ENCODE measurements at regions of chr10 and their contacts with region 1.

Region 1: GRCh38 chr10:29304264-29305030 is 15.6 kb downstream of the LYZL1 start:
- DNase-seq: peak in 1 of 2 donors; percentile 30
- ATAC-seq: peak; percentile 64 to 91 (median 78)
- H3K4me3 ChIP-seq: no peak overlapping the region
- H3K27ac ChIP-seq: no peak overlapping the region
- H3K4me1 ChIP-seq: no peaks in the 10 kb centered on the region
- H3K27me3 ChIP-seq: peaks cover 0 to 3% (median 0%) of the 10 kb centered on the region in 3 donors
- CTCF ChIP-seq: peak; percentile 81

Region 2: GRCh38 chr10:28628184-28628893 is 676.1 kb before region 1 on chr10:
- intact Hi-C with region 1: loop called in 1 of 2 experiments (anchors 2 kb)
- DNase-seq: peak; percentile 81 to 85
- ATAC-seq: peak; percentile 86 to 92 (median 88)
- H3K4me3 ChIP-seq: no peak overlapping the region
- H3K27ac ChIP-seq: no peak overlapping the region
- H3K4me1 ChIP-seq: no peaks in the 10 kb centered on the region
- H3K27me3 ChIP-seq: no peaks in the 10 kb centered on the region
- CTCF ChIP-seq: peak; percentile 90

Region 3: DNA sequence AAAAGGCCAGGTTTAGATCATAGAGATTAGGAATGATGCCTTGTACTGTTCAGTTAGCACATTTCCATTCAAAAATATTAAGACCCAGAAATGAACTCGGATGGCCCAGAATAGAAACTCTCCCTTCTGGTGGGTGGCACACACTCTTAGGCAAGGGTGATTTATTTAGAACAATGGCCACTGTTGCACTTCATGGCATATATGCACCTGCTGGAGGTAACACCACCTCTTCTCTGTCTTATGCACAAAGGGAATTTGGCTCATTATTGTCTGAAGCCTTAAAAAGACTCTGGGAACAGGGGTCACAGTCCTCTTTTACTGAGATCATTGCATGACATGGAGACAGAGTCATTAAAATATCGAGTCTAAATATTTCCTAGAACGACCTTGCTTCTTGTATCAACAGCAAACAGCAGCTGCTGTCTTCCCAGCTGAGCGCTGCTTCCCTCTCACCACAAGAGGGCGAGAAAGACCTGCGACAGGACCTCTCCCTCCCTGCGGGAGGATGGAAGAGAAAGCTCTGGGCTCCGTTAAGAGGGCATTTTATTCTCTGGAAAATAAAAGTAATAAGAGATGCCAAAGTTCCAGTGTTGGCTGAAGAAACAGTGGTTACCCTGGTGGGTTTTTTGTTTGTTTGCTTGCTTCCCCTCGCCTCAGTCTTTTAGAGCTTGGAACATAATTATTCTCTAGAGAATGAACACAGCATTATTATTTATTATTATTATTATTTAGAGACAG is 640.7 kb before region 1 on chr10:
- intact Hi-C with region 1: loop called (anchors 1 to 5 kb)
- DNase-seq: peak; percentile 71 to 85
- ATAC-seq: peak; percentile 91 to 94 (median 92)
- H3K4me3 ChIP-seq: no peak overlapping the region
- H3K27ac ChIP-seq: no peak overlapping the region
- H3K4me1 ChIP-seq: peaks cover 9% of the 10 kb centered on the region
- H3K27me3 ChIP-seq: peaks cover 2 to 22% (median 3%) of the 10 kb centered on the region in 3 donors
- CTCF ChIP-seq: peak; percentile 99

Region 4: GRCh38 chr10:28984431-28984830 is 320.0 kb before region 1 on chr10:
- intact Hi-C with region 1: loop called in 1 of 2 experiments (anchors 10 kb)
- DNase-seq: peak; percentile 89
- ATAC-seq: peak; percentile 96 to 99 (median 98)
- H3K4me3 ChIP-seq: no peak overlapping the region
- H3K27ac ChIP-seq: no peak overlapping the region
- H3K4me1 ChIP-seq: peaks cover 7% of the 10 kb centered on the region
- H3K27me3 ChIP-seq: peaks cover 0 to 4% (median 2%) of the 10 kb centered on the region in 3 donors
- CTCF ChIP-seq: no peak

Region 5: GRCh38 chr10:29239569-29240472 is 64.6 kb before region 1 on chr10:
- intact Hi-C with region 1: loop called in 1 of 2 experiments (anchors 5 kb)
- DNase-seq: no peak
- ATAC-seq: peak in 1 of 4 donors; percentile 49
- H3K4me3 ChIP-seq: no peak overlapping the region
- H3K27ac ChIP-seq: no peak overlapping the region
- H3K4me1 ChIP-seq: no peaks in the 10 kb centered on the region
- H3K27me3 ChIP-seq: no peaks in the 10 kb centered on the region
- CTCF ChIP-seq: peak; percentile 33

Region 6: DNA sequence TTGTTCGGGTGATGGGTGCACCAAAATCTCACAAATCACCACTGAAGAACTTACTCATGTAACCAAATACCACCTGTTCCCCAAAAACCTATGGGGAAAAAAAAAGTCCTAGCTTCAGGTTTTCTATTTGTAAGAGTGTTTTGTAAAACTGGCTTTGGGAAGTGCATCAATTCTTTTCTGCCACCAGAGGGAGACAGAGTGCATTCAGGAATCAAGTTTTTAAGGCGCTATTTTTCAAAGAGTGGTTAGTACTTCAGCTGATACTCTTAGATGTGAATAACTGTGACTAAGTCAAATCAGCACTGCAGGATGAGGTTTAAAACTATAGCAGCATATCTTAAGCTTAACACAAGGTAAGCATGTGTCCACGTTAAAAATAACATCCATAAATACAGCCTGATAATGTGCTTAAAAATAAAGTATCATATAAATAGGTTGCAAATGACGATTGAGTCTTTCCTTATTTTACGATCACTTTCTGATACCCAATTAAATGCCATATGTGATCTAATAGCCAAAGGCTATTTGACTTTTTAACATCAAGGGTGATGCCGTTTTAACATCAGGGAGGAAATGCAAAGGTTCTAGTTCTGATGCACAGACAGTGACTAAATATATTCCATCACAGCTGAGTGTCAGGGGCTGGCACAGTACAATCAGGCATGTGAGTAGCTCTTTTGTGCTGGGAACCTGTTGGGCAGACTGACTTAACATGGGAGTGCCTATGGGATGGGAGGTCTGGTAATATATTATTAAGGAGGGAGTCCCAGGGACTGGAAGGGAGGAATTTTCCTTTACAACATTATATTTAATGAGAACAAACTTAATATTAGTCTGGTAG is 1335.7 kb after region 1 on chr10:
- intact Hi-C with region 1: no loop called
- DNase-seq: no peak
- ATAC-seq: no peak
- H3K4me3 ChIP-seq: no peak overlapping the region
- H3K27ac ChIP-seq: no peak overlapping the region
- H3K4me1 ChIP-seq: peaks cover 10% of the 10 kb centered on the region
- H3K27me3 ChIP-seq: peaks cover 0 to 3% (median 0%) of the 10 kb centered on the region in 3 donors
- CTCF ChIP-seq: peak; percentile 85

Measured in psoas muscle (tissue), 8 donors.